B cell (primary cell): ENCODE measurements at regions of chr9 and their contacts with region 1.

Region 1: GRCh38 chr9:3441197-3441816 is 84.5 kb downstream of the RFX3 start:
- DNase-seq: peak; percentile 74
- ATAC-seq: peak; percentile 78
- H3K4me3 ChIP-seq: no peak overlapping the region
- H3K4me3 Mint-ChIP-seq: no peak overlapping the region
- H3K27ac ChIP-seq: no peak overlapping the region
- H3K27ac Mint-ChIP-seq: no peak overlapping the region
- H3K4me1 ChIP-seq: peaks cover 3% of the 10 kb centered on the region in 2 donors
- H3K4me1 Mint-ChIP-seq: peaks cover 7% of the 10 kb centered on the region
- H3K27me3 ChIP-seq: no peaks in the 10 kb centered on the region
- H3K27me3 Mint-ChIP-seq: no peaks in the 10 kb centered on the region
- CTCF ChIP-seq: peak; percentile 78

Region 2: DNA sequence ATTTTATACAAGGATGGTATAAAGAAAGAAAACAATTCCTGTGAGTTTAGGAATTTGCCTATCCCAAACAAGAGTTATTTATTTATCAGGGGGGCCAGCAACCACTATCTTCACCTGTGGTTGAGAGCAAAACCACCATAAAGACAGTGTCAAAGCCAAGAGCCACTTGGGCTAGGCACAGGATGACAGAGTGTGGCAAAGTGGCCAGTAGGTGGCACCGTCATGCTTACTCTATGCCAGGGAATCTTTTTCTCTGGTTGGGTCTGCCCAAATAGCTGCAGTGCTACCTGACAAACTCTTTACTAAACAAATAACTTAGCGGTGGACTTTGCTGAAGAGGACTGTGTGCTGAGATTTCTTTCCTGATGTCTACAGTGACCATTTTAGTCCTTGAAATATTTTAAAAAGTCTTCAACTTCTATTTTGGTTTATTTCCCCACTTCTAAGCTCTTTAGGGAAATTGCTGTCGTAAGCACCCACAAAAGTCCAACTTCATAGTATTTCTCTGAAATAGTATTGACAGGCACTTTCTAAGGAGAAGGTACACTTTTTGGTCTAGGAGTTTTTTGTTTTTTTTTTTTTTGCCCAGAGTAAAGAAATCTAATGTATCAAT is 200.5 kb before region 1 on chr9:
- CTCF ChIA-PET with region 1: interaction called, 187 read pairs
- POLR2A ChIA-PET with region 1: no interaction called
- intact Hi-C with region 1: loop called (anchors 1 kb)
- DNase-seq: peak; percentile 71
- ATAC-seq: peak; percentile 79
- H3K4me3 ChIP-seq: no peak overlapping the region
- H3K4me3 Mint-ChIP-seq: no peak overlapping the region
- H3K27ac ChIP-seq: no peak overlapping the region
- H3K27ac Mint-ChIP-seq: no peak overlapping the region
- H3K4me1 ChIP-seq: no peaks in the 10 kb centered on the region
- H3K4me1 Mint-ChIP-seq: no peaks in the 10 kb centered on the region
- H3K27me3 ChIP-seq: no peaks in the 10 kb centered on the region
- H3K27me3 Mint-ChIP-seq: no peaks in the 10 kb centered on the region
- CTCF ChIP-seq: peak; percentile 78

Region 3: GRCh38 chr9:3410461-3410860 is 30.8 kb before region 1 on chr9:
- CTCF ChIA-PET with region 1: interaction called, 11 read pairs
- POLR2A ChIA-PET with region 1: no interaction called
- intact Hi-C with region 1: no loop called
- DNase-seq: no peak
- ATAC-seq: no peak
- H3K4me3 ChIP-seq: no peak overlapping the region
- H3K4me3 Mint-ChIP-seq: no peak overlapping the region
- H3K27ac ChIP-seq: no peak overlapping the region
- H3K27ac Mint-ChIP-seq: no peak overlapping the region
- H3K4me1 ChIP-seq: no peaks in the 10 kb centered on the region
- H3K4me1 Mint-ChIP-seq: no peaks in the 10 kb centered on the region
- H3K27me3 ChIP-seq: no peaks in the 10 kb centered on the region
- H3K27me3 Mint-ChIP-seq: no peaks in the 10 kb centered on the region
- CTCF ChIP-seq: no peak

Region 4: DNA sequence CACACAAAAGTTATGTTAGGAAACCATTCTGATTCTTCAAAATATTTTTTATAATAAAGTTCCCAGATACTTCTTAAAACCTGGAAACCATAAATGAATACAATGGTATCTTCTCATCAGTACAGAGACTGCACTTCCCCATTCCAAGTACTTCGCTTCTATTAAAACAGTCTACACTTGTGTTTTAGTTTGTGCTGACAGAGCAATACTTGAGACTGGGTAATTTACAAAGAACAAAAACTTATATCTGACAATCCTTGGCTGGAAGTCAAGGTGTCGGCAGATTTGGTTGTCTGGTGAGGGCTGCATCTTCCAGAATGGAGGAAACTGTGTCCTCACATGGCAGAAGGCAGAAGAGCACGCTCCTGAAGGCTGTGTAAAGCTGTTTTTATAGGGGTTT is 14.4 kb after region 1 on chr9:
- CTCF ChIA-PET with region 1: interaction called, 19 read pairs
- POLR2A ChIA-PET with region 1: no interaction called
- intact Hi-C with region 1: no loop called
- DNase-seq: no peak
- ATAC-seq: no peak
- H3K4me3 ChIP-seq: no peak overlapping the region
- H3K4me3 Mint-ChIP-seq: no peak overlapping the region
- H3K27ac ChIP-seq: no peak overlapping the region
- H3K27ac Mint-ChIP-seq: no peak overlapping the region
- H3K4me1 ChIP-seq: no peaks in the 10 kb centered on the region
- H3K4me1 Mint-ChIP-seq: peaks cover 3% of the 10 kb centered on the region
- H3K27me3 ChIP-seq: no peaks in the 10 kb centered on the region
- H3K27me3 Mint-ChIP-seq: no peaks in the 10 kb centered on the region
- CTCF ChIP-seq: no peak

Region 5: DNA sequence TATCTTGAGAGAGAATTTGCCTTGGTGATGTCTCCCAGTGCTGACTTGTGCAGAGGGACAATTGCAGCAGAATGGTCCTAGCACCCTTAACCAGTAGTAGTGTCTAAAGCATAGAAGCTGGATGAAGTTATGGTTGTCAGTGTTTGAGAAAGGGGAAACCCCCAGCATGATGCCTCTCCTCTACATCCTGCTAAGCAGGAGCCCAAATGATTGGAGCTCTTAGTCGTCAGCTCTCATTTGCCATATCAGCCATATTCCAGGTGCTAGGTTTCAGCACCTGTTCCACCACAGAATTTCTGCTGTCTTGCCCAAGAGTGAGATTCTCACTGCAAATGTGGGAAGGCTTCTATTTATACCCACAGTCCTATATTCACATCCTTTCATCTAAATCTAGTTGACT is 128.2 kb after region 1 on chr9:
- CTCF ChIA-PET with region 1: no interaction called
- POLR2A ChIA-PET with region 1: no interaction called
- intact Hi-C with region 1: no loop called
- DNase-seq: no peak
- ATAC-seq: no peak
- H3K4me3 ChIP-seq: no peak overlapping the region
- H3K4me3 Mint-ChIP-seq: no peak overlapping the region
- H3K27ac ChIP-seq: no peak overlapping the region
- H3K27ac Mint-ChIP-seq: no peak overlapping the region
- H3K4me1 ChIP-seq: no peaks in the 10 kb centered on the region
- H3K4me1 Mint-ChIP-seq: no peaks in the 10 kb centered on the region
- H3K27me3 ChIP-seq: no peaks in the 10 kb centered on the region
- H3K27me3 Mint-ChIP-seq: no peaks in the 10 kb centered on the region
- CTCF ChIP-seq: no peak